ENCODE measurements at regions of chr7 and their contacts with region 1.

Region 1: DNA sequence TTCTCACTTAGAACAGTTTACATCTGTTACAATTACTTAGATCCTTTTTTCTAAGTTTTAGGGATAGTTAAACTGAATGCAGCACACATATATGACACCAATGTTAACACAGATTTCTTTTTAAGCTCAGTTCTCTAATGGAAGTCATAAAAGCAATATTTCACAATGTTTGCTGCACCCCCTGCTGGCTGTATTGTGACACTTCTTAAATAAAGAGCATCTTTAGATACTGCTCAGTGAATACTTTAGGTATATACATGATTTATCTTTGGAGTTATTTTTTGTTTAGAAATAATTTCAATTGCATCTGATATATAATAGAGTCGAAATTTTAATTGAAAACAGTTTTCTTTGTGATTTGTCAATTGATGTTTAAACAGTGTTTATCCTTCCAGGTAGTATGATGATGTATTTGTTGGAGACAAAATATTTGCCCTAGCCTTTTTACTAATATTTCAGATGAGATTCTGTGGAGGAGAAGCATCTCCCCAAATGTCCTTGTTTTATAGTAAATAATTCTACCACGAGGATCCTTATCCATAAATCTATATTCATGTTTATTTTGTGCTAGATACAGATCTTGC is 174.4 kb downstream of the ST7 start:
- DNase-seq: peak; percentile 72
- ATAC-seq: peak; percentile 40
- H3K4me3 Mint-ChIP-seq: no peak overlapping the region
- H3K27ac Mint-ChIP-seq: no peak overlapping the region
- H3K4me1 Mint-ChIP-seq: peaks cover 15% of the 10 kb centered on the region
- H3K27me3 Mint-ChIP-seq: no peaks in the 10 kb centered on the region

Region 2: DNA sequence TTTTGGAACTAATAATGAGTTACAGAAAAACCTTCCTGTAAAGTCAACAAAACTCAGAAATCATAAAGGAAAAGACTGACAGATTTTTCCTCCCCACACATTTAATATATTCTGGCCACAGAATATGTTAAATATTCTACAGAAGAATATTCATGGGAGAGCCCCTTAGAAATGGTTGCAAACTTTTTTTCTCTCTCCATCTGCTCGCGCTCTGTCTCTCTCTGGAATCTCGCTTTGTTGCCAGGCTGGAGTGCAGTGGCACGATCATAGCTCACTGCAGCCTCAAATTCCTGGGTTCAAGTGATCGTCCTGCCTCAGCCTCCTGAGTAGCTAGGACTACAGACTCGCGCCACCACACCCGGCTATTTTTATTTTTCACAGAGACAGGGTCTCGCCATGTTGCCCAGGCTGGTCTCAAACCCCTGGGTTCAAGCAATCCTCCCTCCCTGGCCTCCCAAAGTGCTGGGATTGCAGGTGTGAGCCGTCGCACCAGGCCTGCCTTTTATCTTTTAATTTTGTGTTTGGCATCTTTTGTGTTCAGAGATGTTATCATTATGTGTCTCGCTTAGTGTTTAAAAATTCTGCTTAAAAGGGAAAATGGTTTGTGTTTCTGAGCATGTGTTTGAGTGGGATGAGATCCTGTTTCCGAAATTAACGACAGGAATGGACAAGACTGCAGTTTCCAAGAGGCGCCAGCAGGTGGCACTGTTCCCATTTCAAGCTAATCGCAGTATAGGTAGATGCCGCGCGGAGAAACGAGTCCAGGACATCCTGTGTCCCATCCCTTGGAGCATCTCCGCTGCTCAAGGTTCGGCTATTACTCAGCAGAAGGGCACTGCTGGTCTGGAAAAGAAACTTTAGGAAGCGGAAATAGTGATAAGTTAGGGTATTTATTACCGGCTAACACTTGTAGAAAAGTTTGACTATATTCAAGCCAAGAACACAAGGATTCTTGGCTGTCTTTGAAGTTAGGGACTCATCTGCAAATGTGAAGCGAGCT is 197.5 kb before region 1 on chr7:
- CTCF ChIA-PET with region 1: interaction called, 83 read pairs
- POLR2A ChIA-PET with region 1: no interaction called
- intact Hi-C with region 1: loop called (anchors 1 kb)
- DNase-seq: peak; percentile 86
- ATAC-seq: peak; percentile 85
- H3K4me3 Mint-ChIP-seq: no peak overlapping the region
- H3K27ac Mint-ChIP-seq: no peak overlapping the region
- H3K4me1 Mint-ChIP-seq: peaks cover 6% of the 10 kb centered on the region
- H3K27me3 Mint-ChIP-seq: peaks cover 3% of the 10 kb centered on the region

Region 3: DNA sequence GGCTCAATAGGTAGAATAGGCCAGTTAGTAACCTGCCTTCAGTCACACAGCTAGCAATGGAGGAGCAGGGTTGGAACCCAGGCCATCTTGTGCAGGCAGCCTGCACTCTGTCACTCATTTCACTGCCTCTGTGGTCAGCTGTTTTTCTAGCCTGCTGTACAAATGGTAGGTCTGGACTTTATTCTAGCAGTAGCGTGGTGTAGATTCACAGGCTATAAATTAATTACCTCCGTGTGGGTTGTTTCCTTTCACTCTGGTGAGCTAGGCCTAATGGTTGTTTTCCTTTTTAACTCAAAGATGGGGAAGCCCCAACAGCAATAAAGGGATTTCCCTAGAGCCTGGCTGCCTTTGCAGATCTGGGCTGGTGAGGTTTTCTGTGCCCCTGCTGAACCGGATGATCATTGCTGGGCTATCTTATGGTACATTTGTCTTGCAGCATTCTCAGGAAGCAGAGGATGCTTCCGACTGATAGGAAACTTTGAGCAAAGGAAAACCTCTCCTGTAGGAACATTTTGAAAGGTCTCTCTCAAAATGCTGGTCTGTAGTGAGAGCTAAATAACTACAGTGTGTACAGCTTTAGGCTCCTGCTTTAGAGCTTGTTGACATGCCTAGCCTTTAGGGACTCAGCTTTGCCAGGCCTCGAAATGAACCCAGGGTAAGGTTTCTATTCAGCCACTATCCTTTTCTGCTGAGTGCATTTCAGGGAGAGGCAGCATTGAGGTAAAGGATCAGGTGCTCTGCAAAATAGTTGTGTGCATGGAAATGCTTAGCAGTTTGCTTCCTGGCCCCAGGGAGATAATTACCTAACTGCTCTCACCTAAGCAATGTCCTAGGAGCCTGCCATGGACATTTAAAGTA is 17.0 kb before region 1 on chr7:
- CTCF ChIA-PET with region 1: interaction called, 11 read pairs
- POLR2A ChIA-PET with region 1: no interaction called
- intact Hi-C with region 1: no loop called
- DNase-seq: peak; percentile 69
- ATAC-seq: peak; percentile 97
- H3K4me3 Mint-ChIP-seq: no peak overlapping the region
- H3K27ac Mint-ChIP-seq: peak overlapping the region; percentile 14
- H3K4me1 Mint-ChIP-seq: peaks cover 34% of the 10 kb centered on the region
- H3K27me3 Mint-ChIP-seq: no peaks in the 10 kb centered on the region